Common myeloid progenitor, CD34-positive (primary cell): ENCODE measurements at regions of chr20 and their contacts with region 1.

Region 1: DNA sequence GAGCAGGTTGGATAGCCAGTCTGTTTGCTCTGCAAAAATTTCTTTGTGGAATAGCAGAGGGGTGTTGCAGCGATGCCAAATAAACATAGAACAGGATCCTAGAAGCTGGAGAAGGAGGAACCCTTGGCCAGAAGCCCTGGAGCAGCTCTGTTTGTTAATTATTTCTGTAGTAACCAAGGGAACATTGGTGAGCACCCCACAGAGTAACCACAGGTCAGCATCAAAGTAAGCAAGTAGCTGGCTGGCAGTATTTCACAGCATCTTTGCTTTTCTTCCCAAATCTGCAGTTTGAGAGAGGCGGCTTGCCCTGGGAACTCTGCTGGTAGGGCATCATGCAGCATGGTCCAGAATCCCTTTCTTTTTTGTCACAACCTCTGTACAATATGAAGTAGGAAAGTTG is 12.7 kb upstream of the APMAP start:
- DNase-seq: no peak
- H3K4me3 ChIP-seq: no peak overlapping the region
- H3K27ac ChIP-seq: no peak overlapping the region
- H3K4me1 ChIP-seq: peaks cover 0 to 5% (median 2%) of the 10 kb centered on the region in 4 experiments
- H3K27me3 ChIP-seq: no peaks in the 10 kb centered on the region

Region 2: DNA sequence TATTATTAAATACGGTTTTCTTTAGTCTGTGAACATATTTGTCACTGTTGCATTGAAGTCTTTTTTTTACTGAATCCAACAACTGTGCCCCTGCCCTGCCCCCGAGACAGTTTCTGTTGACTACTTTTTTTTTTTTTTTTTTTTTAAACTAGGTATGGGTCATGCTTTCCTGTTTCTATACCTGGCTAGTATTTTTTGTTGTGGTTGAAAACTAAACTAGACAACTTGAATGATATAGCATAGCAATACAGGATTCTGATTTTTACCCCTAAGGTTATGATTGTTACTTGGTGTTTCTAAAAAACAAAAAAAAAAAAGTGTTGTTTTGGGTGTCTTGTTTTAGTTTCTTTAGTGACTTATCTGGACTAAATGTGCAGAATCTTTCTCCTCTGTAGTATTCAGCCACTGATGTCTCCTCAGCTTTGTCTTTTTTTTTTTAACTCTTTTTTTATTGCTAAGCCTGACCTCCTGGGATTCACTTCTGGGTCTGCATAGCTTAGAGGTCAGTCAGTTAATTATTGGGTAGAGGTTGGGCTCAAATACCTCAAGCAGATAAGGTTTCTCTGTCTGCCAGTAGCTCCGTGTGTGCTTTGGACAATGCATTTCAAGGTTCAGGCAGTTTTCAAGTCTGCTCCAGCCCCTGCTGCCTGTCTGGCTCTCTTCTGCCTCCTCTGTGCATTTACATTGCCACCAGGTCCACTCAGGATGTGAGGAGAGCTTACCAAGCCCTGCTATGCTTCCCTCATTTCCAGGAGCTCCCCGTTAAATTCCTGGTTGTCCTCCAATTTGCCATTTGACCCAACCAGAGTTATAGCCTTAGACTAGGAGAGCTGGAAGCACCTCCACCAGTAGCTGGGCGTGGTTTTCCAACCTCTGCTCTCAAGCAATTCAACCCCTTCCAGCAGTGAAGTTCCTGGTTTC is 444.4 kb before region 1 on chr20:
- CTCF ChIA-PET with region 1: no interaction called
- POLR2A ChIA-PET with region 1: no interaction called
- DNase-seq: no peak
- H3K4me3 ChIP-seq: no peak overlapping the region
- H3K27ac ChIP-seq: no peak overlapping the region
- H3K4me1 ChIP-seq: no peaks in the 10 kb centered on the region
- H3K27me3 ChIP-seq: no peaks in the 10 kb centered on the region

Region 3: DNA sequence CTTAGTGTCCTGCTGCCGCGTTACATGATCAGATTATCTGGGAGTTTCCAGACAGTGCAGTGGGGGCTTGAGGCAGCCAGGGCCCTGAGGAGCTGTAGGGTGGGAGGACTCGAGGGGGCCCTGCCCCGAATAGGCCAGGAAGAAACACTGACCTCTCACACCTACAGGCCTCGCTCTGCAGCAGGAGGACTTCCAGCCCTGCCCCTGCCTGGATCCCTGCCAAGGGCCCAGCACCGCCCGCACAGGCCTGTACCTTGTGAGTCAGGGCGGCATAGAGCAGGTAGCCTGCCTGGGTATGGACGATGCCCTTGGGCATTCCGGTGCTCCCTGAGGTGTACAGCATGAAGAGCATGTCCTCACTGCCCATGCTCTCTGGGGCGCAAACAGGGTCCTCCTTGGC is 17.5 kb after region 1 on chr20:
- CTCF ChIA-PET with region 1: interaction called, 13 read pairs
- POLR2A ChIA-PET with region 1: interaction called, 4 read pairs
- DNase-seq: no peak
- H3K4me3 ChIP-seq: no peak overlapping the region
- H3K27ac ChIP-seq: no peak overlapping the region
- H3K4me1 ChIP-seq: peaks cover 0 to 10% (median 8%) of the 10 kb centered on the region in 4 experiments
- H3K27me3 ChIP-seq: no peaks in the 10 kb centered on the region

Region 4: GRCh38 chr20:25057234-25058050 is 52.2 kb after region 1 on chr20:
- CTCF ChIA-PET with region 1: interaction called, 160 read pairs
- POLR2A ChIA-PET with region 1: no interaction called
- DNase-seq: peak; percentile 69 to 89 (median 88)
- H3K4me3 ChIP-seq: peak overlapping the region; percentile 67 to 87 (median 75)
- H3K27ac ChIP-seq: peak overlapping the region; percentile 64 to 74
- H3K4me1 ChIP-seq: peaks cover 9 to 65% (median 59%) of the 10 kb centered on the region in 4 experiments
- H3K27me3 ChIP-seq: peaks cover 0 to 5% (median 0%) of the 10 kb centered on the region in 5 experiments